ENCODE measurements at regions of chr11 and their contacts with region 1.

Region 1: DNA sequence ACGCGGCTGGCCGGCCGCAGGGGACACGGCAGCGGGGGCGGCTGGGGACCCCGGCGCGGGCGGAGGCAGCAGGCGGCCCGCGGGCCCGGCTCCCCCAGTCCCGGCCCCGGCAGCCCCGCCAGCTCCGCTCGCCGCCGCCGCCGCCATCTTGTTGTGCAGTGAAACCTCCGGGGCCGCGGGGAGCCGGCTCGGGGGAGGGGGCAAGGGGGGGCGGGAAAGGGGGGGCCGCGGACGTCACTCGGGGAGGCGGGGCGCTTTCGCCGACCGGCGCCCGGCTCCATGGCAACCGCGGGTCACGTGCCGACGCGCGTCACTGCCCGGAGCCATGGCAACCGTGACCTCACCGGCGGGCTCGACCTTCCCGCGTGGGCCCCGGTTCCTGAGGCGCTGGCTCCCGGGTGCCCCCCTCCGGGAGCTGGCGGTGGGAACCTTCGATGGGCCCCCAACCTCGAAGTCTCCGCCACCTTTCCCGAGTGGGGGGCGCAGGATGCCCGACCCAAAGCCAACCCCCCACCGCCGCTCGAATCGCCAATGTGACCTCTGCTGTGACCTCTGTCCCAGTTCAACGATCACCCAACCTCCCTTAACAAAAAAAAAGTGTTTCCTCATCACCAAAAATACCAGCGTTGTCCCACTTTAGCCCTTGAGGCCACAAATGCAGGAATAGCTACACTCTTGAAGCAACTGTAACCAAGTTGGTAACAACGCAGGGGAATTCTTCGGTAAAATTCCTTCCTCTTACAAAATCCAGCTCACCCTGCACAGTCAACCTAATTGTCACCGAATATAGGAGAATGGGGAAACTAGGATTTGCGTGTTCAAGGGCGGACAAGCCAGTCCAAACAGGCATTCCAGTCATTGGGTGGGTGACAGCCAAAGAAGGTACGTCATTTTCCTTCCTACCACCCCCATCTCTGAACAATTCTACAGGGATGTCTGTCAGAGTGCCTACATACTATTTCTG is at the start of gene SIK3:
- DNase-seq: peak; percentile 85 to 95
- H3K4me3 ChIP-seq: peak within 1 kb of the TSS; percentile 92 to 94
- H3K27ac ChIP-seq: peak within 1 kb of the TSS; percentile 94 to 99
- H3K4me1 ChIP-seq: peaks cover 0 to 49% (median 29%) of the 10 kb centered on the region in 4 donors
- H3K27me3 ChIP-seq: no peaks in the 10 kb centered on the region
- CTCF ChIP-seq: peak in 1 of 2 experiments; percentile 9

Region 2: DNA sequence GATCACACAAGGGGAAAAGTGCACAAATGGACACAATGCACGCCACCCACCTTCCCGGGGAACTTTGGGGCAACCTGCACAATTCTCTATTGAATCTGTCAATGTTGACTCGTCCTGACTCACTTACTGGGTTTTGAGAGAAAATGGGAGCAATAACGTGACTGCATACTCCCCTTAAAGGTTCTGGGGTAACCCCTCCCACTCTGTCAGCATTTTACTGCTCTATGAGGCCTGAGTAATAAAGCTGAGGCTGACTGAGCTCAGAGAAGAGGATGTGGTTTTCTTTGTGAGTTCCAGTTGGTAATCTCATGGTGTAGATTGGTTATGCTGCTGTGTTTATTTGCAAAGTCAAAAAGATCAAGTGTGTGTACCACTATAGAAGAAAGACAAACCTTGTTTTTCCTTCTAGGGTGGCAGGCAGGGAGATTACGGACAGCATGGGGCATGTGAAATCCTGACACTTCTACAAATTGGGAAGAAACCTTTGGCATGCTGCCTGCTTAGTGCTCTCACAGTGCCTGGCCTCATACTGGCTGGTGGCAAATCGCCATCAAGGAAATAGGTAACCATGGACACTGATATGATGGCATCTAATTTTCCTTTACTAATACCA is 245.0 kb before region 1 on chr11:
- intact Hi-C with region 1: no loop called
- DNase-seq: no peak
- H3K4me3 ChIP-seq: no peak overlapping the region
- H3K27ac ChIP-seq: no peak overlapping the region
- H3K4me1 ChIP-seq: peaks cover 0 to 17% (median 7%) of the 10 kb centered on the region in 4 donors
- H3K27me3 ChIP-seq: no peaks in the 10 kb centered on the region
- CTCF ChIP-seq: no peak

Region 3: DNA sequence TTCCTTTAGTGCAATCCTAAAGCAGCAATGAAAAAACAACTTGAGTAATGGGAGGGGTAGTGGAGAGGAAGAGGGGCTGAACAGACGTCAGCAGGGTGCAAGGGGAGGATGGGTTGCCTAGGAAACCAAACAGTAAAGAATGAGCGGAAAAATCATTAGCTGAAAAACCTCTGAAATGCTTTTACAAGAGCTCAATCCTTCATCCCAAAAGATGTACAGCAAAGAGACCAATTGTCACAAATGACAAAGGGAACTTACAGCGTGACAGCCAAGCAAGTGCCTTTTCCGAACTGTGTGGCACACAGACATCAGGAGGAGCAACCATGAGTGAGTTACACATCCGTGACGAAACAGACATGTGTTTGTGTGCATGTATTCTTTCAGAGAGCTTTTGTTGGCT is 105.0 kb before region 1 on chr11:
- intact Hi-C with region 1: loop called (anchors 10 kb)
- DNase-seq: no peak
- H3K4me3 ChIP-seq: no peak overlapping the region
- H3K27ac ChIP-seq: no peak overlapping the region
- H3K4me1 ChIP-seq: peaks cover 0 to 46% (median 24%) of the 10 kb centered on the region in 4 donors
- H3K27me3 ChIP-seq: no peaks in the 10 kb centered on the region
- CTCF ChIP-seq: no peak

Region 4: DNA sequence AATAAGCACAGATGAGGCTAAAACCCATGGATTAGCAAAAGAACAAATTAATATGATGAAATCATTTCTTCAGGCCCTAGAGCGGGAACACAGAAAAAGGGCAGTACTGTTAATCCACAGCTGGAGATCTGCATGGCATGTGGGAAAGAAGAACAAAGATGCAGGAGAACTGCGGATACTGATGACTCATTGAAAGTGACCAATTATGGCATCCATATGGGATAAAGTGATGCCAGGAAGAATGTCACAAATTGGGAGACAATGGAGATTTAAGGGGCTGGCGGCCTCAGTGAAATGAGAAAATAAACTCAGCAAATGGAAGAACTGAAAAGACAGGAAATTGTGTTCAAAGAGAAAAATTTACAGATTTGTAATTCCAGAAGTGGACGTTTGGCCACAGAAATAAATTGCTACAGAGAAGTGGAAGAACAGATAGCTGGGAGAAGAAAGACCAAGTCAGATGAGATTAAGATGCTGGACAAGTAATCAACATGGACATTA is 39.7 kb before region 1 on chr11:
- intact Hi-C with region 1: no loop called
- DNase-seq: no peak
- H3K4me3 ChIP-seq: no peak overlapping the region
- H3K27ac ChIP-seq: no peak overlapping the region
- H3K4me1 ChIP-seq: peaks cover 0 to 32% (median 8%) of the 10 kb centered on the region in 4 donors
- H3K27me3 ChIP-seq: no peaks in the 10 kb centered on the region
- CTCF ChIP-seq: no peak

Measured in tibial artery (tissue), 4 donors.